Gastrocnemius medialis (tissue), 4 donors: ENCODE measurements at regions of chr1 and their contacts with region 1.

Region 1: DNA sequence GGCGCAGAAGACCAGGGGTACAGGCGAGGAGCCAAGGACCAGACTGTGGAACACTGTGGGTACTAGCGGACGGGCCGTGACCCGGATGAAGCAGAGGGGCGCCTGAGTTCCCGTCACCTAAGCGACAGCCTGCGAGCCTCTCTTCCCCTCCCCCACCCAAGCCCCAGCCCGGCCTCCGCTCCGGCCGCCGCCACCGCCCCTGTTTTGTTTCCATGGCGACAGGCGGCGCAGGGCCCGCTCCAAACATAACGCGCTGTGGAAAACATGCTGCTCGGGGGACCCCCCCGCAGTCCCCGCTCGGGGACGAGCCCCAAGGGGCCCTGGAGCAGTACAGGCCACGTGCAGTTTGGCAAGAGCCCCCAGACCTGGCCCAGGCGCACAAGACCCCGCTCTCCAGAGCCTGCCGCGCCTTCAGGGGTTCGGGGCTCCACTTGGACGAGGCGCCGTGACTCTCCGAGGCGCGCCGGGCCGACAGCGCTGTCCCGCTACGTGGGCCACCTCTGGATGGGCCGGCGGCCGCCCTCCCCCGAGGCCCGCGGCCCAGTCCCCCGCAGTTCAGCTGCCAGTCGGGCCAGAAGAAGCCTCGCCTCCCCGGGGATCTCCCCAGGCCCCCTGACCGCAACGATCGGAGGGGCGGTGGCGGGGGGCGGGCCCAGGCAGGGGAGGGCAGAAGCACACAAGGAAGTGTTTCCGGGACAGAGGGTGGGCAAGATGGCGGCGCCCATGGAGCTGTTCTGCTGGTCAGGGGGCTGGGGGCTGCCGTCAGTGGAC is at the start of gene MTX1:
- DNase-seq: peak; percentile 78 to 79
- ATAC-seq: peak; percentile 82 to 84
- H3K4me3 ChIP-seq: peak within 1 kb of the TSS; percentile 88 to 95 (median 90)
- H3K27ac ChIP-seq: peak within 1 kb of the TSS; percentile 93 to 99 (median 96)
- H3K4me1 ChIP-seq: peaks cover 16 to 28% of the 10 kb centered on the region in 2 donors
- H3K27me3 ChIP-seq: no peaks in the 10 kb centered on the region
- CTCF ChIP-seq: peak in 1 of 5 experiments; percentile 4
- POLR2A ChIP-seq: peak; percentile 42 to 67
- total RNA-seq, gene MTX1: 14.4 to 26.9 (median 24.6) TPM

Region 2: DNA sequence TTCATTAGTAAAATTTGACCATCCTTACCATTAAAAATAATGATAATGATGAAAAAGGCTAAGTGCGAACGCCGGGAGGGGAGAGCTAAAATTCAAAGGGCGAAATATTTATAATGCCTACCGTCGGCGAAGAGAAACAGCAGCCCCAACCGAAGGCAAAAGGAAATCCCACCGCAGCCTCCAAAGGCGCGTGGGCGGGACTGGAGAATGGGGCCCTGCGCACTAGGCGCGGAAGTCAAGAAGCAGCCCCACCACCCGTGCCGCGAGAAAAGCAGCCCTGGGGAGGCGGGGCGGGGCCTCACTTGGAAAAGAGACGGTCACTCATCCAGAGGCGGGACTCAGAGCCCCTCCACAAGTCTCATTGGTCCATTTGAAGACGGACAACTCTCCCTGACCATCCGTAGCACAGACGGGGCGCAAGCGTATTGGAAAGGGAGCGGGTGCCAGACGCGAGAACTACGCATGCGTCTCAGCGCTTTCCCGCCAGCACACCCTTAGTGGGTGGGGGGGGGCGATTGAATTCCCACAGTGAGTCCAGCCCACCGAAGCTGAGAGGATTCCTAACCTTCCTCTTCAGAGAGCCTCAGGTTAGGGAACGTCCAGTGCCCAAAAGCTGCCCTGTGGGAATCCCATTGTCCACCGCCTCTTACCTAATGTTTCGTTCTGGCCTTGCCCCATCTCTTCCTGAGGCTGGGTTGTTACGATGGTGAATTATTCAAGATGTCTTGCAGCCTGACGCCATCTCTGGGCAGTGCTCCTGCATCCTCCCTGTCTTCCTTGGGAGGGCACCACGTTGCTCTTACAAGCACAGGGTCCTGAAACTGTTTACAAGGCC is 18.8 kb after region 1 on chr1:
- in situ Hi-C with region 1: no loop called
- intact Hi-C with region 1: loop called (anchors 1 kb)
- DNase-seq: peak; percentile 97 to 99
- ATAC-seq: peak; percentile 99 to 100
- H3K4me3 ChIP-seq: peak overlapping the region; percentile 55 to 92 (median 70)
- H3K27ac ChIP-seq: peak overlapping the region; percentile 77 to 83 (median 78)
- H3K4me1 ChIP-seq: peaks cover 8 to 15% of the 10 kb centered on the region in 2 donors
- H3K27me3 ChIP-seq: no peaks in the 10 kb centered on the region
- CTCF ChIP-seq: peak in 1 of 5 experiments; percentile 3
- POLR2A ChIP-seq: peak; percentile 53 to 74